ENCODE measurements at regions of chr2 and their contacts with region 1.

Region 1: GRCh38 chr2:233443468-233444183 is 89.3 kb downstream of the DGKD start:
- DNase-seq: peak; percentile 87
- ATAC-seq: peak; percentile 26 to 51

Region 2: DNA sequence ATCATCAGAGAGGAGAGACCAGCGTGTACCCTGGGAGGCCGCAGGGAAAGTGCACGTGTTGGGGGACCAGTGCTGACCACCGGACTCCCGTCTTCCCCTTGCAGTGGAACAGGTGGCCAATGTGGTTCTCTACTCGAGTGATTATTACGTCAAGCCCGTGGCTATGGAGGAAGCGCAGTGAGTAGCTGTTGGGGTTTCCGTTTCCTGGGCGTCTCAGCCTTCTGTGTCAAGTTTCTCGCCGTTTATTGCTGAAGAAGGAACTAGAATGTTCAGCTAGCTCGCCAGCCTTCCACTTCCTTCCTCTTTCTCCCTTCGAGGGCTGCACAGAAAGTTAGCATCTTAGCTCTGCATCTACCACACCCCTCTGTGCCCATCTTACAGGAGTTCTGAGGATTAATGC is 112.1 kb before region 1 on chr2:
- intact Hi-C with region 1: no loop called
- DNase-seq: peak; percentile 64
- ATAC-seq: peak; percentile 78 to 86

Region 3: DNA sequence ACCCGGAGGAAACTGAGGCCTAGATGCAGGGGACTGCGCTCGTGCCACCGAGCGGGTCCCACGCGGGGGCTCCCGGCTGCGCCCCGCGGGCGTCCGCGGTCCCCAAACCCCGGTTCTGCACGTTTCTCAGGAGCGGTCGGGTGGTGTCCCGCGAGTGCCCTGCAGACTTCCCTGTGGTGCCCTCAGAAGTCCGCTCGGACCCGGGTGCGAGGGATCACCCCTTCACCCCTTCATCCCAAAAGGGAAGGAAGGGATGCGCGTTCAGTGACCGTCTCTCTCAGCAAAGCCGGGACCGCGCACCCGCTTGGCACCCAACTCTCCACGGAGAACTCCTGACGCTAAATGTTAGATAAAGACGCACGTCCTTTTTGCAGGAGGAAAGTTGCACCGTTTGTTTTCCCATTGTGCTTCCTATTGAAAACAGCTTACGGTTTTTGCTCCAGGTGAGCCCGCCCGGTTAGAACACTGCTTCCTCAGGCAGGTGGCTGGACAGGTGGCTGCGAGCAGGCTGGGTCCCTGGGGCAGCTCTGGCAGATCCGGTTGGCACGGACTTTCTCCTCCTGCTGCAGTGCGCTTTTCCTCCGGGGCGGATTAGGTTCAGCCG is 88.6 kb before region 1 on chr2:
- intact Hi-C with region 1: loop called (anchors 5 kb)
- DNase-seq: peak; percentile 48
- ATAC-seq: no peak

Region 4: DNA sequence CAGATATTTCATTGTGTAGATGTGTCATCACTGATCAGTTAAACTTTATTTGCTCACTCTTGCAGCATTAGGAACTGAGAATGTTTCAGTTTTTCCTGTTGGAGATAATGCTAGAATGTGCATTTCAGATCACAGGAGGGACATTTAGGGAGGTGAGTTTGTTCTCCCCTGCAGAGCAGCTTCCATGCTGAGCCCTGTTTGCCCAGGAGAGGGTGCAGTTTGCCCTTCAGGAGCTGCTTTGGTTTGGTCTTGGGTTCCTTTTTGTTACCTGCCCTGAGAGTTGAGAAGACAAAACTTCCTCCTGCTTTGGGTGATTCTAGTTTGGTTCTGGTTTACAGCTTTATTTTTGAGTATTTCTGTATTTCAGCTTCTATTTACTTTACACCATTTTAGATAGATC is 39.4 kb before region 1 on chr2:
- intact Hi-C with region 1: loop called in 1 of 2 experiments (anchors 5 kb)
- DNase-seq: no peak
- ATAC-seq: peak in 1 of 2 donors; percentile 53

Region 5: DNA sequence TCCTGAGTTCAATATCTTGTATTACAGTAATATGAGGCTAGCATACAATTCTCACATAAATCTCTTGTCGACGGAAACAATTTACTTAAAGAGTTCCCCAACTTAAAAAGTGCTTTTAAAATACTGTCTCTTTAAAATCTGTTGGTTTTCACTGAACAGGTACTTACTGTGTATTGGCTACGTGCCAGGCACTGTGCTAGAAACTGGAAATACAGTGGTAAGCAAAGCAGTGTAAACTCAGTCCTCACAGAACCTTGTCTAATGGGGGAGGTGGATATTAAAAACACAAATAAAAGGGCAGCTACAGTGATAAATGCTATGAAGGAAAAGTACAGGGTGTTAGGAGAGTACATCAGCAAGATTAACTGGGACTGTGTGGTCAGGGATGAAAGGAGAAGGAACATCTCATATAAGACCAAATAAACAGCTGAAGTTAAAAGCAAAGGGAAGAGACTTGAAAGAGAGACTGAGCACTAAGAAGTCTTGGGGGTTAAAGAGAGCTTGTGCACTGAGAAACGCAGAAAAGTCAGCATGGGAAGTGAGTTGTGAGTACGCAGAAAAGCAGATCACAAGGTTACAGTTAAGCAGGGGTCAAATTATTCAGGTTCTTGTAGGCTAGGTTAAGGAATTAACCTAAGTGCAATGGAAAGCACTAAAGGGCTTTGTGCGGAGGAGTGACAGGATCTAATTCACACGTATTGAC is 70.5 kb after region 1 on chr2:
- intact Hi-C with region 1: no loop called
- DNase-seq: no peak
- ATAC-seq: no peak

Measured in left cardiac atrium (tissue), 4 donors.